ENCODE measurements at regions of chr1 and their contacts with region 1.

Region 1: DNA sequence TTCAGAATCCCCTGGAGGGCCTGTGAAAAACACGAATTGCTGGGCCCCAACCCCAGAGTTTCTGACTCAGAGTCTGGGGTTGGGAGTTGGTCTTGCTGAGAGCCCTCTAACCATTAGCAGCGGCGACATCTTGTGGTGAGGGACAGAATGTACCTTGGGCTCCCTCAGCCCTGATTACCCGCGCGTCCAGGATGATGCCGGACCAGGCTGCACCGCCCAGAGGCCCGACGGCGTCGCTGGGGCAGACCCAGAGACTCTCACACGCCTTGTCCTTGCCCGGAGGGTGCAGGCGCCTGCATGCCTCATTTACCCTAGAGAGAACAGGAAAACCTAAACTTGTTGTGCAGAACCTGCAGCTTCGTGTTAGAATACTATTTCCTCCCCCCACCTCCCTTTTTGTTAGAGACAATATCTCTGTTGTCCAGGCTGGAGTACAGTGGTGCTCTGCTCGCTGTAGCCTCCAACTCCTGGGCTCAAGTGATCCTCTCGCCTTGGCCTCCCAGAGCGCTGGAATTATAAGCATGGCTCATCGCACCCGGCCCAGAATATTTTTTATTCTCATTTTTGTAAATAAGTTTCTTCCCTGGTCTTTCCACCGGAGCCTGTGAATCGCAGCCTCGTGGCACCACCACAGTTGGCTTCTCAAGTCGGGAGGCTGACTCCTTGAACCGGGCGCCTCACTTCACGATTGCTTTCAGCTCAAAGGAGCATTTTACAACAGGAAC is 22.2 kb upstream of the RD3 start:
- DNase-seq: peak; percentile 90 to 91
- H3K4me3 ChIP-seq: no peak overlapping the region
- H3K4me3 Mint-ChIP-seq: peak overlapping the region; percentile 70
- H3K27ac Mint-ChIP-seq: peak overlapping the region; percentile 12
- H3K4me1 ChIP-seq: peaks cover 36% of the 10 kb centered on the region
- H3K4me1 Mint-ChIP-seq: peaks cover 20% of the 10 kb centered on the region
- H3K27me3 ChIP-seq: no peaks in the 10 kb centered on the region
- H3K27me3 Mint-ChIP-seq: peaks cover 11% of the 10 kb centered on the region
- CTCF ChIP-seq: peak; percentile 74 to 85

Region 2: DNA sequence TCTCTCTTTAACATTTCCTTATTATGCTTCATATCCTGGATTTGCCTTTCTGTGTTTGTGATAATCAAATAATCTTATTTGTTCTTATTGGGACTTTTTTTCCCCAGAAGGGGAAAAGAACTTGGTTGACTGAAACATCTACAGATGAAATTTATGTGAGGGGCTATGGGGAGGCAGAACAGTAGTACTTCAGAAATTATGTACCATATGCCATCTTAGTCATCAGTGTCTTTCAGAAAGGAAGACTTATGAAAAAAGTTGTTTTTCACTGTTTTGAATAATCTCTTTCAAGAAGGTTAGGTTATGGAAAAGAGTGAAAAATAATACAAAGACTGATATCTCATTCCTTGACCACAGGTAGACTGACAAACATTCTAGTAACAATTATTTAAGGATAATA is 217.8 kb before region 1 on chr1:
- CTCF ChIA-PET with region 1: no interaction called
- POLR2A ChIA-PET with region 1: no interaction called
- intact Hi-C with region 1: no loop called
- DNase-seq: no peak
- H3K4me3 ChIP-seq: no peak overlapping the region
- H3K4me3 Mint-ChIP-seq: no peak overlapping the region
- H3K27ac Mint-ChIP-seq: no peak overlapping the region
- H3K4me1 ChIP-seq: no peaks in the 10 kb centered on the region
- H3K4me1 Mint-ChIP-seq: no peaks in the 10 kb centered on the region
- H3K27me3 ChIP-seq: no peaks in the 10 kb centered on the region
- H3K27me3 Mint-ChIP-seq: no peaks in the 10 kb centered on the region
- CTCF ChIP-seq: no peak

Region 3: GRCh38 chr1:211323156-211324063 is 190.8 kb before region 1 on chr1:
- CTCF ChIA-PET with region 1: interaction called, 5 read pairs
- POLR2A ChIA-PET with region 1: no interaction called
- intact Hi-C with region 1: loop called (anchors 1 kb)
- DNase-seq: peak; percentile 65 to 68
- H3K4me3 ChIP-seq: no peak overlapping the region
- H3K4me3 Mint-ChIP-seq: no peak overlapping the region
- H3K27ac Mint-ChIP-seq: no peak overlapping the region
- H3K4me1 ChIP-seq: no peaks in the 10 kb centered on the region; the same call in 1 of the 2 replicates
- H3K4me1 Mint-ChIP-seq: no peaks in the 10 kb centered on the region
- H3K27me3 ChIP-seq: no peaks in the 10 kb centered on the region
- H3K27me3 Mint-ChIP-seq: no peaks in the 10 kb centered on the region
- CTCF ChIP-seq: peak; percentile 73 to 84

Region 4: GRCh38 chr1:211469938-211470529 is 44.2 kb before region 1 on chr1:
- CTCF ChIA-PET with region 1: interaction called, 10 read pairs
- POLR2A ChIA-PET with region 1: no interaction called
- intact Hi-C with region 1: loop called (anchors 1 kb)
- DNase-seq: peak; percentile 86 to 87
- H3K4me3 ChIP-seq: no peak overlapping the region
- H3K4me3 Mint-ChIP-seq: no peak overlapping the region
- H3K27ac Mint-ChIP-seq: no peak overlapping the region
- H3K4me1 ChIP-seq: no peaks in the 10 kb centered on the region
- H3K4me1 Mint-ChIP-seq: no peaks in the 10 kb centered on the region
- H3K27me3 ChIP-seq: peaks cover 2% of the 10 kb centered on the region; the same call in 1 of the 2 replicates
- H3K27me3 Mint-ChIP-seq: peaks cover 5% of the 10 kb centered on the region
- CTCF ChIP-seq: peak; percentile 94 to 96

Region 5: GRCh38 chr1:211551628-211552460 is 37.7 kb after region 1 on chr1:
- CTCF ChIA-PET with region 1: interaction called, 3 read pairs
- POLR2A ChIA-PET with region 1: no interaction called
- intact Hi-C with region 1: loop called (anchors 5 kb)
- DNase-seq: peak; percentile 56 to 58
- H3K4me3 ChIP-seq: no peak overlapping the region
- H3K4me3 Mint-ChIP-seq: no peak overlapping the region
- H3K27ac Mint-ChIP-seq: peak overlapping the region; percentile 40
- H3K4me1 ChIP-seq: peaks cover 28% of the 10 kb centered on the region
- H3K4me1 Mint-ChIP-seq: no peaks in the 10 kb centered on the region
- H3K27me3 ChIP-seq: no peaks in the 10 kb centered on the region
- H3K27me3 Mint-ChIP-seq: no peaks in the 10 kb centered on the region
- CTCF ChIP-seq: no peak

Region 6: GRCh38 chr1:211578640-211579433 is 64.6 kb after region 1 on chr1 and contains the start of gene SLC30A1:
- CTCF ChIA-PET with region 1: interaction called, 4 read pairs
- POLR2A ChIA-PET with region 1: no interaction called
- intact Hi-C with region 1: loop called (anchors 2 kb)
- DNase-seq: peak; percentile 98
- H3K4me3 ChIP-seq: peak within 1 kb of the TSS; percentile 98
- H3K4me3 Mint-ChIP-seq: peak within 1 kb of the TSS; percentile 72
- H3K27ac Mint-ChIP-seq: peak within 1 kb of the TSS; percentile 81
- H3K4me1 ChIP-seq: peaks cover 20% of the 10 kb centered on the region
- H3K4me1 Mint-ChIP-seq: peaks cover 19% of the 10 kb centered on the region
- H3K27me3 ChIP-seq: no peaks in the 10 kb centered on the region
- H3K27me3 Mint-ChIP-seq: no peaks in the 10 kb centered on the region
- CTCF ChIP-seq: no peak
- total RNA-seq, gene SLC30A1: 21.6 and 26.6 TPM in 2 replicates

Measured in Caco-2 (cell line).